Naive thymus-derived CD8-positive, alpha-beta T cell (primary cell): ENCODE measurements at regions of chr17 and their contacts with region 1.

Region 1: GRCh38 chr17:31313982-31314784 is at the start of gene EVI2B:
- DNase-seq: peak in 3 of 10 donors; percentile 62 to 70 (median 63)
- ATAC-seq: peak; percentile 19 to 35
- H3K4me3 Mint-ChIP-seq: peak within 1 kb of the TSS; percentile 79 to 98 (median 94)
- H3K27ac Mint-ChIP-seq: peak within 1 kb of the TSS; percentile 84 to 98 (median 94)
- H3K4me1 Mint-ChIP-seq: peaks cover 19 to 58% (median 37%) of the 10 kb centered on the region in 4 donors
- H3K27me3 Mint-ChIP-seq: no peaks in the 10 kb centered on the region
- polyA plus RNA-seq, gene EVI2B: 69.5 to 82.1 (median 79.7) TPM

Region 2: GRCh38 chr17:30894236-30894635 is 419.9 kb before region 1 on chr17:
- POLR2A ChIA-PET with region 1: no interaction called
- DNase-seq: no peak
- ATAC-seq: no peak
- H3K4me3 Mint-ChIP-seq: no peak overlapping the region
- H3K27ac Mint-ChIP-seq: peak overlapping the region in 2 of 10 donors; percentile 2 to 64
- H3K4me1 Mint-ChIP-seq: peaks cover 0 to 2% (median under 1%) of the 10 kb centered on the region in 4 donors
- H3K27me3 Mint-ChIP-seq: no peaks in the 10 kb centered on the region

Region 3: GRCh38 chr17:31248986-31249834 is 65.0 kb before region 1 on chr17:
- POLR2A ChIA-PET with region 1: no interaction called
- DNase-seq: no peak
- ATAC-seq: no peak
- H3K4me3 Mint-ChIP-seq: no peak overlapping the region
- H3K27ac Mint-ChIP-seq: no peak overlapping the region
- H3K4me1 Mint-ChIP-seq: peaks cover 0 to 9% (median 0%) of the 10 kb centered on the region in 4 donors
- H3K27me3 Mint-ChIP-seq: no peaks in the 10 kb centered on the region

Region 4: GRCh38 chr17:31297090-31297489 is 17.1 kb before region 1 on chr17 and contains the start of gene OMG:
- POLR2A ChIA-PET with region 1: interaction called, 16 read pairs
- DNase-seq: no peak
- ATAC-seq: no peak
- H3K4me3 Mint-ChIP-seq: no peak within 1 kb of the TSS
- H3K27ac Mint-ChIP-seq: no peak within 1 kb of the TSS
- H3K4me1 Mint-ChIP-seq: peaks cover 4 to 30% (median 27%) of the 10 kb centered on the region in 4 donors
- H3K27me3 Mint-ChIP-seq: no peaks in the 10 kb centered on the region
- polyA plus RNA-seq, gene OMG: not detected